ENCODE measurements at regions of chr5 and their contacts with region 1.

Region 1: DNA sequence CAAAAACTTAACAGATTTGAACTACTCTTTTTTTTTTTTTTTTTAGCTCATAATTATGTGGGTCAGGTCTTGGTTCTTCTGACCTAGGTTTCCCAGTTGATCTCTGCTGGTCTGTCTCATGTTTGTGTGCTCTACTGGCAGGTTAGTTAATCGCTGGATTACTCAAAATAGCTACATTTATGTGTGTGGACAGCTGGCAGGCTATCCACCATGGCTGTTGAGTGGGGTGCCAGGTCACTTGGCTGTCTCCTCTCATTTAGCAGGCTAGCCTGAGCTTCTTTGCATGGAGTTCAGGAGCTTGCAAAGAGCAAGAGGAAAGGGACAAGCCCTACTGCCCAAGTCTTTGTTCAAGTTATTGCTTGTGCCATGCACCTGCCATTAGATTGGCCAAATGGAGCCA is 9.3 kb downstream of the ADCY2 start:
- DNase-seq: no peak
- ATAC-seq: no peak
- H3K4me3 ChIP-seq: no peak overlapping the region
- H3K4me1 ChIP-seq: no peaks in the 10 kb centered on the region
- CTCF ChIP-seq: no peak

Region 2: GRCh38 chr5:7745882-7746610 is 340.8 kb after region 1 on chr5:
- intact Hi-C with region 1: loop called in 1 of 2 experiments (anchors 10 kb)
- DNase-seq: peak in 2 of 3 donors; percentile 55 to 84
- ATAC-seq: peak; percentile 67
- H3K4me3 ChIP-seq: no peak overlapping the region
- H3K4me1 ChIP-seq: no peaks in the 10 kb centered on the region
- CTCF ChIP-seq: no peak

Measured in mucosa of descending colon (tissue), 3 donors.